Panc1 (cell line): ENCODE measurements at regions of chr5 and their contacts with region 1.

Region 1: GRCh38 chr5:134380346-134380745 is 9.0 kb downstream of the UBE2B start:
- DNase-seq: no peak
- ATAC-seq: no peak
- H3K4me3 ChIP-seq: no peak overlapping the region
- H3K27ac ChIP-seq: no peak overlapping the region
- H3K4me1 ChIP-seq: no peaks in the 10 kb centered on the region
- H3K27me3 ChIP-seq: no peaks in the 10 kb centered on the region
- CTCF ChIP-seq: no peak

Region 2: GRCh38 chr5:134176511-134177368 is 203.6 kb before region 1 on chr5 and contains the start of gene SKP1:
- CTCF ChIA-PET with region 1: no interaction called
- POLR2A ChIA-PET with region 1: interaction called, 10 read pairs
- in situ Hi-C with region 1: no loop called
- intact Hi-C with region 1: no loop called
- DNase-seq: peak; percentile 35
- ATAC-seq: peak; percentile 92
- H3K4me3 ChIP-seq: peak within 1 kb of the TSS; percentile 80 to 92
- H3K27ac ChIP-seq: peak within 1 kb of the TSS; percentile 85
- H3K4me1 ChIP-seq: peaks cover 22% of the 10 kb centered on the region
- H3K27me3 ChIP-seq: no peaks in the 10 kb centered on the region
- CTCF ChIP-seq: no peak
- total RNA-seq, gene SKP1: 301 TPM